Activated CD4-positive, alpha-beta T cell treated with anti-CD3 and anti-CD28 coated beads for 36 hours (primary cell): ENCODE measurements at regions of chr11 and their contacts with region 1.

Region 1: GRCh38 chr11:36492724-36493304 is 17.3 kb downstream of the TRAF6 start:
- DNase-seq: peak; percentile 41
- ATAC-seq: peak; percentile 74
- H3K4me3 Mint-ChIP-seq: no peak overlapping the region
- H3K27ac Mint-ChIP-seq: peak overlapping the region; percentile 24
- H3K4me1 Mint-ChIP-seq: peaks cover 23% of the 10 kb centered on the region
- H3K27me3 Mint-ChIP-seq: no peaks in the 10 kb centered on the region

Region 2: DNA sequence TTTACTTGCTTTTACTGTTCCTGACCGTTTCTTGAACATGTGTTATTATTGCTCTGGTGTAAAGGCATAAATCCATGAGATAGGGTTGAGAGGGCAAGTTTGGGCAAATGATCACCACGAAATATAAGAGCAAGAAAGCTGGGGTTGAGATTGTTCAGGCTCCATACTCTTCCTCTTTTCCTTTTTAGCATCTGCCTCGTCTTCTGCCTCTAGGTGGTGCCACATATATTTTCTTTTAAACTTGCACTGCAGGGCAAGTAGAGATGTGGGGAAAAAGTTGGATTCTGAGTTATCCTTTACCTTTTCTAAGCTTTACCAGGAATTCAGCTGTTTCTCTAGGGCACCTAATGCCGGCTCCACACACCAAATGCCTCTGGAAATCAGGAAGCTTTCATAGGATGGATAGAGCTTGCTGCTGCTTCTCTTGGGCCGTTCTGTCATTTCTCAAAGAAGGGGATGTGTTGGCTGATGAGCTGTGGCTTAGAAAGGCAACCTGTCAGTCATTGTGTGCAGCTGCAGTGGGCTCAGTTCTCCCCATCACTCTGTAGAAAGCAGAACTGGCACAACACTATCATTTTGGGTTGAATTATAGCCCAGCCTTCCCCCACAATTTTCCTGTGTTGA is 450.7 kb before region 1 on chr11:
- CTCF ChIA-PET with region 1: no interaction called
- POLR2A ChIA-PET with region 1: no interaction called
- intact Hi-C with region 1: loop called in 1 of 2 experiments (anchors 5 kb)
- DNase-seq: no peak
- ATAC-seq: no peak
- H3K4me3 Mint-ChIP-seq: no peak overlapping the region
- H3K27ac Mint-ChIP-seq: no peak overlapping the region
- H3K4me1 Mint-ChIP-seq: no peaks in the 10 kb centered on the region
- H3K27me3 Mint-ChIP-seq: peaks cover 10% of the 10 kb centered on the region

Region 3: DNA sequence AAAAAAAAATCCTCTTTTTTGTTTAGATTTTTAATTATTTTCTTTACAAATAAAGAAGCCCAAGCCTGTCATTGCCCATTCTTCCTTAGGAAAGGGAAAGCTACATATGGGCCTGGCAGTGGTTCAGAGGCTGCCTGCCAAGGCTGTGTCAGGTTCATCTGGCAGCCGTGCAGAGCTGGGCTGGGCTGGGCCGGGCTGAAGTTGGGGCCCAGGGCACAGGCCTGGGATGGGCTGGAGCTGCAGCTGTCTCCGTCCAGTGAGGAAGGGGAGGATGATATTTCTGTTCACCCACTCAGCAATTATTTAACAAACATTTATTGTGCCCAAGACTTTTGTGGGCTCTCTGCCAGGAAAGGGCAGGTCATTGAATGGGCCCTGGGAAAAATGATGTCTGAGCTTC is 192.2 kb before region 1 on chr11:
- CTCF ChIA-PET with region 1: interaction called, 144 read pairs
- POLR2A ChIA-PET with region 1: no interaction called
- intact Hi-C with region 1: no loop called
- DNase-seq: no peak
- ATAC-seq: no peak
- H3K4me3 Mint-ChIP-seq: no peak overlapping the region
- H3K27ac Mint-ChIP-seq: no peak overlapping the region
- H3K4me1 Mint-ChIP-seq: no peaks in the 10 kb centered on the region
- H3K27me3 Mint-ChIP-seq: peaks cover 6% of the 10 kb centered on the region

Region 4: GRCh38 chr11:36306888-36307287 is 185.9 kb before region 1 on chr11:
- CTCF ChIA-PET with region 1: interaction called, 11 read pairs
- POLR2A ChIA-PET with region 1: no interaction called
- intact Hi-C with region 1: loop called (anchors 1 kb)
- DNase-seq: peak; percentile 64
- ATAC-seq: peak; percentile 53
- H3K4me3 Mint-ChIP-seq: no peak overlapping the region
- H3K27ac Mint-ChIP-seq: no peak overlapping the region
- H3K4me1 Mint-ChIP-seq: peaks cover 12% of the 10 kb centered on the region
- H3K27me3 Mint-ChIP-seq: peaks cover 13% of the 10 kb centered on the region

Region 5: DNA sequence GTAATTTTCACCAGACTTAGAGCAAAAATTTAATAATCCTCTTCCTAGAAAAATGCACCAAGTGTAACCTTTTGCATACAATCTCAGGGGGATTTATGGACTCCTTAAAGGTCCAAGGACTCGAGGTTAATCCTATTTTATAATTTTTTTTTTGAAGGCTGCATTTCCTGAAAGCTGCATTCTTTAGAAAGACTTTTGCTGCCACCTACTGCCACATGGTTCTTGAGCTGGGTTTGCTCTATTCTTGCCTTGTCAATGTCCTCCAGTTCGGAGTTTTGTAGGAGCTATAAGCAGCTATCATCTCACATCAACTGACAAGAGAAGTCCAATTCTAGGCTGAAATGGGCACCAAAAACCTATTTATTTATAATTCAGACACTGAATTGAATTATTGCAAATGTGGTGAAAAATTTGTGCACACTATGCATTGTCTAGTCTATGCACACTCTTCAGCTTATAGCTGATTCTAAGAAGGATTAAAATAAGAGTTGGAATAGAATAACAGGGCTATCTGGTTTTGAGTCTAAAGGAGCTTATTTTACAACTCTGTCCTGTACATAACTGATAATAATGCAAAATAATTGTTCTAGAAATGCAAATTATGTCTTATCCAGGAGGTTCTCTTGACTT is 14.0 kb before region 1 on chr11:
- CTCF ChIA-PET with region 1: interaction called, 51 read pairs
- POLR2A ChIA-PET with region 1: no interaction called
- intact Hi-C with region 1: no loop called
- DNase-seq: peak; percentile 54
- ATAC-seq: peak; percentile 44
- H3K4me3 Mint-ChIP-seq: no peak overlapping the region
- H3K27ac Mint-ChIP-seq: no peak overlapping the region
- H3K4me1 Mint-ChIP-seq: peaks cover 6% of the 10 kb centered on the region
- H3K27me3 Mint-ChIP-seq: no peaks in the 10 kb centered on the region

Region 6: GRCh38 chr11:36509694-36510566 is 17.1 kb after region 1 on chr11 and contains the start of gene TRAF6:
- CTCF ChIA-PET with region 1: interaction called, 34 read pairs
- POLR2A ChIA-PET with region 1: no interaction called
- intact Hi-C with region 1: loop called in 1 of 2 experiments (anchors 1 kb)
- DNase-seq: peak; percentile 95
- ATAC-seq: peak; percentile 95
- H3K4me3 Mint-ChIP-seq: peak within 1 kb of the TSS; percentile 95
- H3K27ac Mint-ChIP-seq: peak within 1 kb of the TSS; percentile 88
- H3K4me1 Mint-ChIP-seq: peaks cover 32% of the 10 kb centered on the region
- H3K27me3 Mint-ChIP-seq: peaks cover 5% of the 10 kb centered on the region
- total RNA-seq, gene TRAF6: 11.1 to 12.5 TPM